MCF 10A (cell line): ENCODE measurements at regions of chr4 and their contacts with region 1.

Region 1: GRCh38 chr4:127732613-127733328 is 2.6 kb downstream of the SLC25A31 start:
- DNase-seq: peak; percentile 58
- H3K4me3 Mint-ChIP-seq: no peak overlapping the region
- H3K27ac Mint-ChIP-seq: no peak overlapping the region
- H3K4me1 Mint-ChIP-seq: no peaks in the 10 kb centered on the region
- H3K27me3 Mint-ChIP-seq: no peaks in the 10 kb centered on the region
- CTCF ChIP-seq: peak; percentile 56

Region 2: GRCh38 chr4:127586922-127587571 is 145.7 kb before region 1 on chr4:
- CTCF ChIA-PET with region 1: interaction called, 14 read pairs
- POLR2A ChIA-PET with region 1: no interaction called
- intact Hi-C with region 1: no loop called
- DNase-seq: peak; percentile 67
- H3K4me3 Mint-ChIP-seq: no peak overlapping the region
- H3K27ac Mint-ChIP-seq: no peak overlapping the region
- H3K4me1 Mint-ChIP-seq: no peaks in the 10 kb centered on the region
- H3K27me3 Mint-ChIP-seq: no peaks in the 10 kb centered on the region
- CTCF ChIP-seq: peak; percentile 74

Region 3: GRCh38 chr4:127604949-127605709 is 127.6 kb before region 1 on chr4:
- CTCF ChIA-PET with region 1: interaction called, 236 read pairs
- POLR2A ChIA-PET with region 1: interaction called, 25 read pairs
- intact Hi-C with region 1: loop called (anchors 1 kb)
- DNase-seq: peak; percentile 56
- H3K4me3 Mint-ChIP-seq: no peak overlapping the region
- H3K27ac Mint-ChIP-seq: no peak overlapping the region
- H3K4me1 Mint-ChIP-seq: peaks cover 8% of the 10 kb centered on the region
- H3K27me3 Mint-ChIP-seq: peaks cover 14% of the 10 kb centered on the region
- CTCF ChIP-seq: peak; percentile 41

Region 4: DNA sequence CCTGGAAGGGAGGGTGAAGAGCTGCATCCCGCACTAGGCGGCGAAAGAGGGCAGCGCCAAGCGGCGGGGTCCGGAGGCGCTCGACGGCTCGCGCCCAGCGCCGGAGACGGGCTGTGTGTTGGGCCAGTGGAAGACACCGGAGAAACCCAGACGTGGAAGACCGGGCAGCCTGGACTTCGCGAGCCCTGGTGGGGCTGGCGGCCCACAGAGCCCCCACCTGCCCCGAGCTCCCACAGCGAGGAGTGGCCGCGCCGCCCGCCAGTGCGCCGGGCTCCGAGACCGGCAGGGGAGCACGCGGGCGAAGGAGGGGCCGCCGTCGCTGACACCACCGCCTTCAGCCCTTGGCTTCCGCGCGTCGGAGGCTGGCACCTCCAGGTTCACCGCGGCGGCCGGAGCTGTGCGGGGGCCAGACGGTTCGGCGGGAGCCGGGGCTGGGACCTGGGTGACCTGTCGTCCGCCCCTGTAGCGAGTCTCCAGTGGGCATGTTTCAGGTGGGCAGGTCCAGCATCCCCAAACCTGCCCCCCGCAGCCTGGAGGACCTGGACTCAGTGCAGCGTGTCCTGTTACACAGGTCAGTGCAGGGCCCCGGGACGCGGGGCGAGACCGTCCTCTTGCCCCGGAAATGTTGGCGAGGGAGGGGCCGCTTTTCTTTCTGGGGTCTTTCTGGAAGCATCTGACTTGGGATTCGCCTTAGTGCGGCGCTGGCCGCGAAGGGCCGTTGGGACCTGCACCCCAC is 109.7 kb before region 1 on chr4:
- CTCF ChIA-PET with region 1: interaction called, 22 read pairs
- POLR2A ChIA-PET with region 1: interaction called, 3 read pairs
- intact Hi-C with region 1: no loop called
- DNase-seq: peak; percentile 77
- H3K4me3 Mint-ChIP-seq: peak overlapping the region; percentile 70
- H3K27ac Mint-ChIP-seq: no peak overlapping the region
- H3K4me1 Mint-ChIP-seq: no peaks in the 10 kb centered on the region
- H3K27me3 Mint-ChIP-seq: peaks cover 2% of the 10 kb centered on the region
- CTCF ChIP-seq: peak; percentile 16

Region 5: DNA sequence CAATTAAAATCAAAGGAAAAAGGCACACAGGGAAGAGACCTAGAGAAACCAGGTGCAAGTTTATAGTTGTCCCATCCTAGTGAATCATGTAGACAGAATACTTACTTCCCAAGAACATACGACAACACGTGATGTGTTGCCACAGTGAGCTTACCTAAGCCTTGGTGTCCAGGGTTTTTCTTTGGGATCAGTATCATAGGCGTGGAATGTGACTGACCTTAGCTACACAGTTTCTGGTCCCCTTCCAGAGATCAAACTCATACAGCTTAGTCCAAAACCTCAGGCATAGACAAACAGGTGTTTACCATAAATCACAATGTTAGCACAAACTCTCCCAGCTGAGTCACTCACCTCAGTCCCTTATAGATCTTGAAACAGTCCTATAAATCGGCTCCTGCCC is 15.1 kb after region 1 on chr4:
- CTCF ChIA-PET with region 1: interaction called, 21 read pairs
- POLR2A ChIA-PET with region 1: interaction called, 3 read pairs
- intact Hi-C with region 1: no loop called
- DNase-seq: no peak
- H3K4me3 Mint-ChIP-seq: no peak overlapping the region
- H3K27ac Mint-ChIP-seq: no peak overlapping the region
- H3K4me1 Mint-ChIP-seq: no peaks in the 10 kb centered on the region
- H3K27me3 Mint-ChIP-seq: no peaks in the 10 kb centered on the region
- CTCF ChIP-seq: no peak